ENCODE measurements at regions of chr11 and their contacts with region 1.

Region 1: DNA sequence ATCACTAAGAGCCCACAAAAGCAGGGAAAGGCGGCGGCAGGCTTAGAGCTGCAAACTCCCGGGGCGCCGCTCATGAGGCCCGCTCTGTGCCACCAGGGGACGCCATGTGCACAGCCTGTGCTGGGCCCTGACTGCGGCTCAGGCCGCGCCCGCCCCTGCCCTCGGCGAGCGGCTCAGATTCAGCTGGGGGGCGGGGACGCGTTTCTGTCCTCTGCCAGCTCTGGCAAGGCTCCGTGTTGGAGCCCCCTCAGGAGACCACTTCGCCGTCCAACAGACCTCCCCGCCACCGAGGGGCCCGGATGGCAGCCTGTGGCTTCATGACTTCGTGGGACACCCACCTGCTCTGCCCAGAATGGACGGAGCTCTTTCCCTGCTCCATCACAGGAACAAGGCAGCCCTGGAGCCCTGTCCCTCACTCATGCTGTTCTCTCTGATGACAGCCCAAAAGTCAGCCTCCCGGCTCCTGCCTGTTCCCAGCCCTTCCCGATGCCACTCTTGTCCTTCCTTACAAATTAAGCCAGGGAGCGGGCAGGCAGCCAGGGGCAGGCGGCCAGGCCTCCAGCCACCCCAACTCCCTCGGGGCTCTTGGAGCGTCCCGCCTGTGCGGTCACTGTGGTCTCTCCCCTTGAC is 69.1 kb downstream of the NAT10 start:
- DNase-seq: peak; percentile 84
- H3K4me3 Mint-ChIP-seq: peak overlapping the region; percentile 44
- H3K27ac Mint-ChIP-seq: no peak overlapping the region
- H3K4me1 Mint-ChIP-seq: peaks cover 24% of the 10 kb centered on the region
- H3K27me3 Mint-ChIP-seq: peaks cover 3% of the 10 kb centered on the region

Region 2: DNA sequence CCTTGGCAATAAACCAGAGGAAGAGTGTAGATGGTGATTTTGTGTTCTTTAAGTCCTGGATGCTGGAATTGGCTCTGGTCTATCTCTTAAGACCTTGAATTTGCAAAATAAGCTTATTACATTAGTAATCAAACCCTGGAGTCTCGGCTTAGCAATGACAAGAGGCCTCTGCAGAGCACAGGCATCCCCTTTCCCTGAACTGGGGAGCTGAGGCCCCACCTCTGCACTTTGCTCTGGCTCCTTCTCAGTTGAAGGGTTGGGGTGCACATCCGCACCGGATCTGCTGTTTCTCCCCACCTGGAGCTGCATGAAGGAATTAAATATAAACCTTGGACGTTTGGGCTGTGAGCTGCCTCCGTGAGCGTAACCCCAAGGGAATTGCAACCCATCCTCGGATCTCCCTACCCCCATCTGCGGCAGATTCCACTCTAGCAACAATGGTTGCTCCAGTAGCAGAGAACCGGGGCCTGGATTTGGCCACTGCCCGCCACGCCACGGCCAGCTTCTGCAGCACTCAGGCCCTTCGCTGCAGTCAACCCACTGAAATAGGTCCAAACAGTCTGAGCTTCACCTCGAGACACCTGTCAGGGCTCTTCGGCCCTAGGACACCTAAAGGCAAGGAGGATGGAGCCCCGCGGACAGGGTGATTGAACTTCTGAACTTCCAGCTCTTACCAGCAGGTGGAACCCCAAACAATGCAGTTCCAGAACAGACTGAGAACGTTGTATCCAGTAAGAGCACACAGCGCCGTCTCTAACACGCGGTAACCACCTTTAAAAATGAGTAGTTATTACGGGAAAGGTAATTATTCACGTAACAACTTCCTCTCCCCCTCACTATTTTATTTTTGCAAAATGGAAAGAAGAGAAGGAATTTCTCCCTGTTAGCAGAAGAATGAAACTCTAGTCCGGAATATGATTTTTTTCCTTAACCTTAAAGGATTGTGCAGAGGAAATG is 177.8 kb before region 1 on chr11:
- CTCF ChIA-PET with region 1: interaction called, 18 read pairs
- POLR2A ChIA-PET with region 1: no interaction called
- DNase-seq: peak; percentile 76
- H3K4me3 Mint-ChIP-seq: peak overlapping the region; percentile 12
- H3K27ac Mint-ChIP-seq: no peak overlapping the region
- H3K4me1 Mint-ChIP-seq: peaks cover 9% of the 10 kb centered on the region
- H3K27me3 Mint-ChIP-seq: peaks cover 34% of the 10 kb centered on the region

Region 3: DNA sequence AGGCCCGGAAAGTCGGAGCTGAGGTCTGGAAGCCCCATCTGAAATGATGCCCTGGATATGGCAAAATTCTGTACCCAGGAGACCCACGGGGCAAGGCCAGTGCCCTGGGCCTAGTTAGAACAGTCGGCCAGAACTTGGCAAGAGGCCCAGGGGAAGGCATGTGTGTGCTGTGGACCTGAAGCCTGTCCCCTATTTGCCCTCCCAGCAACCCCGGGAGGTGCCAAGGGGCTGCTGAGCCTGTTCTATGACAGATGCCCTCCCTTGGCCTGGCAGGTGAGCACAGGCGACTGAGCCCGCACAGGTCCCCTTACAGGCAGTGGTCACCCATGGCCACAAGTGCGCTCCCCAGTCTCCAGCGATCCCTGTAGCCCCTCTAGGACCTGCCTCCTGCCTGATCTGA is 17.4 kb before region 1 on chr11:
- CTCF ChIA-PET with region 1: interaction called, 10 read pairs
- POLR2A ChIA-PET with region 1: interaction called, 3 read pairs
- DNase-seq: no peak
- H3K4me3 Mint-ChIP-seq: no peak overlapping the region
- H3K27ac Mint-ChIP-seq: no peak overlapping the region
- H3K4me1 Mint-ChIP-seq: peaks cover 20% of the 10 kb centered on the region
- H3K27me3 Mint-ChIP-seq: no peaks in the 10 kb centered on the region

Region 4: GRCh38 chr11:34234086-34234740 is 59.7 kb after region 1 on chr11:
- CTCF ChIA-PET with region 1: interaction called, 21 read pairs
- POLR2A ChIA-PET with region 1: interaction called, 6 read pairs
- DNase-seq: peak; percentile 80
- H3K4me3 Mint-ChIP-seq: no peak overlapping the region
- H3K27ac Mint-ChIP-seq: peak overlapping the region; percentile 62
- H3K4me1 Mint-ChIP-seq: peaks cover 48% of the 10 kb centered on the region
- H3K27me3 Mint-ChIP-seq: peaks cover 13% of the 10 kb centered on the region

Region 5: GRCh38 chr11:34250732-34251639 is 76.5 kb after region 1 on chr11:
- CTCF ChIA-PET with region 1: interaction called, 16 read pairs
- POLR2A ChIA-PET with region 1: interaction called, 4 read pairs
- DNase-seq: peak; percentile 82
- H3K4me3 Mint-ChIP-seq: peak overlapping the region; percentile 9
- H3K27ac Mint-ChIP-seq: peak overlapping the region; percentile 33
- H3K4me1 Mint-ChIP-seq: peaks cover 58% of the 10 kb centered on the region
- H3K27me3 Mint-ChIP-seq: peaks cover 14% of the 10 kb centered on the region

Region 6: DNA sequence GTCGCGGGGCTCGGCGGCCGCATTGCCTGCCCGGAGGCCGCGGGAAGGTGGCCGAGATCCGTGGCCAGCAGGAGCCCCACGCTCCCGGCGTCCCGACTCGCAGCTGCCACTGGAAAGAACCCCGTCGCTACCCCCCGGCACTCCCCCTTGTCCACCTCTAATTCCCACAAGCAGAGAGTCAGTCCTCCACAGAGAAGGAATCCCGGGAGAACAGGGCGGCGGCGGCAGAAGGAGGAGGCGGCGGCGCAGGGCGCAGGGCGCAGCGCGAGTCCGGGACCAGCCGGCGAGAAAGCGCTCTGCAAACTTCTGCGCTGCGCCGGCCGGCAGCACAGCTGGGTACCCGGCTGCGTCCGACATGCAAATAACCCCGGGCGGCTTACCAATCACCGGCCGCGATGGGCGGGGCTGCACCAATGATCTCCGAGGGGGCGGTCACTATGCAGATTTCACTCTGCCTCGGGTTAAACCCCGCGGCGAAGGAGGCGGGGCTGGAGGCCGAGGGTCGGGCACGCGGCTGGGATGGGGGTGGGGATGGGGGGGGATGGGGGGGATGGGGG is 183.3 kb after region 1 on chr11 and contains the start of gene ABTB2:
- CTCF ChIA-PET with region 1: interaction called, 129 read pairs
- POLR2A ChIA-PET with region 1: interaction called, 33 read pairs
- DNase-seq: peak; percentile 98
- H3K4me3 Mint-ChIP-seq: peak within 1 kb of the TSS; percentile 74
- H3K27ac Mint-ChIP-seq: peak within 1 kb of the TSS; percentile 74
- H3K4me1 Mint-ChIP-seq: peaks cover 29% of the 10 kb centered on the region
- H3K27me3 Mint-ChIP-seq: peaks cover 46% of the 10 kb centered on the region
- total RNA-seq, gene ABTB2: 2.3 to 2.7 TPM

Region 7: GRCh38 chr11:34468209-34468841 is 293.8 kb after region 1 on chr11:
- CTCF ChIA-PET with region 1: interaction called, 19 read pairs
- POLR2A ChIA-PET with region 1: no interaction called
- DNase-seq: peak; percentile 56
- H3K4me3 Mint-ChIP-seq: no peak overlapping the region
- H3K27ac Mint-ChIP-seq: no peak overlapping the region
- H3K4me1 Mint-ChIP-seq: peaks cover 6% of the 10 kb centered on the region
- H3K27me3 Mint-ChIP-seq: no peaks in the 10 kb centered on the region

Measured in activated CD4-positive, alpha-beta memory T cell treated with anti-CD3 and anti-CD28 coated beads, Interleukin-2, amount 10 ng/mL, durations not matched to agents 7 days and 5 days (primary cell).